CD8-positive, alpha-beta T cell (primary cell): ENCODE measurements at regions of chr13 and their contacts with region 1.

Region 1: DNA sequence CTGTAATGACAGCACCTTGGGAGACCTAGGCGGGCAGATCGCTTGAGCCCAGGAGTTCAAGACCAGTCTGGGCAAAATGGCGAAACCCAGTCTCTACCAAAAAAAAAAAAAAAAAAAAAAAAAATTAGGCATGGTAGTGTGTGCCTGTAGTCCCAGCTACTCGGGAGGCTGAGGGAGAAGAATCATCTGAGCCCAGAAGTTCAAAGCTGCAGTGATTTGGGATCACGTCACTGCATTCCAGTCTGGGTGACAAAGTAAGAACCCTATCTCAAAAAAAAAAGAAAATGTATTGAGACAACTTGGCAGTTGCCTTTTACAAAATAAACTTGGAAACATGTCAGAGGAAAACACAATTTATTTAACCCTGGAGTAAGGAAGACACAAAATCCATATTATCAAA is 26.8 kb downstream of the RBM26 start:
- DNase-seq: no peak
- ATAC-seq: no peak
- H3K4me3 ChIP-seq: no peak overlapping the region
- H3K4me3 Mint-ChIP-seq: no peak overlapping the region
- H3K27ac ChIP-seq: no peak overlapping the region
- H3K27ac Mint-ChIP-seq: no peak overlapping the region
- H3K4me1 ChIP-seq: peaks cover 17% of the 10 kb centered on the region
- H3K4me1 Mint-ChIP-seq: peaks cover 50% of the 10 kb centered on the region
- H3K27me3 ChIP-seq: no peaks in the 10 kb centered on the region
- H3K27me3 Mint-ChIP-seq: no peaks in the 10 kb centered on the region
- CTCF ChIP-seq: no peak

Region 2: DNA sequence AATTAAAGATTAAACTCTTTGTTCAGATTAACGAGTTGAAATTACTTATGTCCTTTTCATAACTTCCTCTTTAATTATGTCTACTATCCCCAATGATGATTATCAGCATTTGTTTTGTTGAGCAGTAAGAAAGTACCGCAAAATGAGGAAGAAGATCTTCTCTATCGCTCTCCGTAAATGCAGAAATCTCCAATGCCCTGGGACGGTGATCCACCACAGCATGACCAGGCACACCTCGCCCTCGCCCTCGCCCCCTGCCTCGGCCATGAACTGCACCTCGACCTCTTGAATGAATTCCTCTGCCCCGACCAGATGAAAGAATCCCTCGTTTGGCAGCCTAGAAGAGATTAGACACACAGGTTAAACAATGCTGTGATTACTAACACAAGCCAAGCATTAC is 42.3 kb before region 1 on chr13:
- CTCF ChIA-PET with region 1: no interaction called
- POLR2A ChIA-PET with region 1: no interaction called
- intact Hi-C with region 1: loop called in 1 of 2 experiments (anchors 5 kb)
- DNase-seq: no peak
- ATAC-seq: no peak
- H3K4me3 ChIP-seq: no peak overlapping the region
- H3K4me3 Mint-ChIP-seq: no peak overlapping the region
- H3K27ac ChIP-seq: no peak overlapping the region
- H3K27ac Mint-ChIP-seq: peak overlapping the region; percentile 69
- H3K4me1 ChIP-seq: no peaks in the 10 kb centered on the region
- H3K4me1 Mint-ChIP-seq: peaks cover 2% of the 10 kb centered on the region
- H3K27me3 ChIP-seq: no peaks in the 10 kb centered on the region
- H3K27me3 Mint-ChIP-seq: no peaks in the 10 kb centered on the region
- CTCF ChIP-seq: no peak

Region 3: GRCh38 chr13:79360095-79360494 is 19.2 kb before region 1 on chr13:
- CTCF ChIA-PET with region 1: no interaction called
- POLR2A ChIA-PET with region 1: interaction called, 4 read pairs
- intact Hi-C with region 1: loop called in 1 of 2 experiments (anchors 2 kb)
- DNase-seq: no peak
- ATAC-seq: no peak
- H3K4me3 ChIP-seq: no peak overlapping the region
- H3K4me3 Mint-ChIP-seq: no peak overlapping the region
- H3K27ac ChIP-seq: no peak overlapping the region
- H3K27ac Mint-ChIP-seq: no peak overlapping the region
- H3K4me1 ChIP-seq: no peaks in the 10 kb centered on the region
- H3K4me1 Mint-ChIP-seq: peaks cover 12% of the 10 kb centered on the region
- H3K27me3 ChIP-seq: no peaks in the 10 kb centered on the region
- H3K27me3 Mint-ChIP-seq: no peaks in the 10 kb centered on the region
- CTCF ChIP-seq: no peak

Region 4: GRCh38 chr13:79393564-79394249 is 14.4 kb after region 1 on chr13:
- CTCF ChIA-PET with region 1: interaction called, 10 read pairs
- POLR2A ChIA-PET with region 1: interaction called, 3 read pairs
- intact Hi-C with region 1: loop called (anchors 2 kb)
- DNase-seq: peak in 8 of 9 experiments; percentile 21 to 83 (median 60)
- ATAC-seq: peak; percentile 66
- H3K4me3 ChIP-seq: peak overlapping the region; percentile 15 to 59
- H3K4me3 Mint-ChIP-seq: peak overlapping the region; percentile 84
- H3K27ac ChIP-seq: peak overlapping the region; percentile 42 to 49
- H3K27ac Mint-ChIP-seq: peak overlapping the region; percentile 95
- H3K4me1 ChIP-seq: peaks cover 58% of the 10 kb centered on the region
- H3K4me1 Mint-ChIP-seq: peaks cover 69% of the 10 kb centered on the region
- H3K27me3 ChIP-seq: no peaks in the 10 kb centered on the region
- H3K27me3 Mint-ChIP-seq: no peaks in the 10 kb centered on the region
- CTCF ChIP-seq: no peak